ENCODE measurements at regions of chr2 and their contacts with region 1.

Region 1: DNA sequence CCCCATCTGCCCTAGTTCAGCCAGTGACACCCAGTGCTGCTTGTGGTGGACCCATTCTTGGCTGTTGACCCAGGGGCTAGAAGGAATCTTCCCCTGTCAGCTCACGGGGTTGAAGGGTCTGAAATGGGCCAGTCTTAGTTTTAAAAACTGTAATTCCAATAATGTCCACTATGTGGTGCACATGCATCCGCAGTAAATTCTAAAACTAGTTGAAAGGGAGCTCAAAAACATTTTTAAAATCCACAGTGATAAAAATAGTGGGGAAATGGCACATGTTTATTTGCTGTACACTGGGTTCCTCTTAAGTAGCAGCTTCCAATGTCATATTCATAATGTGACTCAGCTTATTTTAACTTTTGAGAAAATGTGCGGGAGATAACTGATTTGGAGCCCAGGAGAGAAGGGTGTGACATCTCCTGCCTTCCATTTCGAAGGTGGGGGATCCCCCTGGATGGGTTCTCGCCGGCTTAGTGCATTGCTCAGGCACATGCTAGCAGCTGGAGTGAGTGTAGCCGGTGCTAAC is 32.8 kb downstream of the GRHL1 start:
- DNase-seq: peak; percentile 52
- H3K4me3 Mint-ChIP-seq: no peak overlapping the region
- H3K27ac Mint-ChIP-seq: peak overlapping the region; percentile 15
- H3K4me1 Mint-ChIP-seq: peaks cover 16% of the 10 kb centered on the region
- H3K27me3 Mint-ChIP-seq: peaks cover 5% of the 10 kb centered on the region

Region 2: DNA sequence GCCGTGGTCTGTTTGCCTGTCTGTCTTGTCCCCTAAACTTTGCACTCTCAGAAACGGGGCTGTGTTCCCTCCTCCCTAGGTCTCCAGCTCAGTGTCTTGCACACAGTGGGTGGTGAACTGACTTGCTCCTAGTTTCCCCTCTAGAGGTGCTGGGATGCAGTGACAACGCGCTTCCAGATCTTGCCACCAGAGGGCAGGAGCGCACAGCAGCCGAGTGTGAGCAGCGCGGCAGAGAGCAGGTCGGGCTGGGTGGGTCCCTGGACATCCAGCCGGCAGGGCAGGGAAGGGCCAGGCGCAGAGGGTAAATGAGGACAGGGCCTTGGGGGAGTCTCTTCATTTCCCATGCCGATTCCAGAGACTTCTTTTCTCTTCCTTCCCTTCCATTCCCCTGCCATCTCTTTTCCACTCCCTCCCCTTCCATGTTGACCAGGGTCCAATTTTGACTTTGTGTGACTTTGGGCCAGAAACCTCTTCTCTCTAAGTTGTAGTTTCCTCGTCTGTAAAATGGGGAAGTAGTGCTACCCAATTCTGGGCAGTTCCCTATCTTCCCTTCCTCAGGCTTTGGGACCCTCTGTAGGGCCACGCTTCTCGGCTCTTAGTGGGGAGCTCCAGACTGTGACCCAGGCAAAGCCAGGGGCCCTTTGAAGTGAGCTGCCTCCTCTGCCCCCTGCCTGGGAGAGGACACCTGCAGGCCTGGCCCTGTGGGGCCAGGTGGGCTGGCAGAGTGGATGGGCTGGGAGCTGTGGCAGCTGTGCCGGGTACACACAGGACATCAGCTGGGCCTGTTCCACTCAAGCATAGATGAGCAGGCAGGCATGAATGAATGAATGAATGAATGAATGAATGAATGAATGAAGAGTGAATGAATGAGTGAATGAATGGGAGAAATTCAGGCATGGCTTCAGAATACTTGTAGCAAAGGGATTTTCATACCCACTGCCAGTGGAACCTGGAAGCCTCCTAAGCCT is 184.3 kb before region 1 on chr2:
- CTCF ChIA-PET with region 1: interaction called, 10 read pairs
- POLR2A ChIA-PET with region 1: no interaction called
- intact Hi-C with region 1: no loop called
- DNase-seq: peak; percentile 94
- H3K4me3 Mint-ChIP-seq: no peak overlapping the region
- H3K27ac Mint-ChIP-seq: peak overlapping the region; percentile 36
- H3K4me1 Mint-ChIP-seq: peaks cover 35% of the 10 kb centered on the region
- H3K27me3 Mint-ChIP-seq: no peaks in the 10 kb centered on the region

Region 3: DNA sequence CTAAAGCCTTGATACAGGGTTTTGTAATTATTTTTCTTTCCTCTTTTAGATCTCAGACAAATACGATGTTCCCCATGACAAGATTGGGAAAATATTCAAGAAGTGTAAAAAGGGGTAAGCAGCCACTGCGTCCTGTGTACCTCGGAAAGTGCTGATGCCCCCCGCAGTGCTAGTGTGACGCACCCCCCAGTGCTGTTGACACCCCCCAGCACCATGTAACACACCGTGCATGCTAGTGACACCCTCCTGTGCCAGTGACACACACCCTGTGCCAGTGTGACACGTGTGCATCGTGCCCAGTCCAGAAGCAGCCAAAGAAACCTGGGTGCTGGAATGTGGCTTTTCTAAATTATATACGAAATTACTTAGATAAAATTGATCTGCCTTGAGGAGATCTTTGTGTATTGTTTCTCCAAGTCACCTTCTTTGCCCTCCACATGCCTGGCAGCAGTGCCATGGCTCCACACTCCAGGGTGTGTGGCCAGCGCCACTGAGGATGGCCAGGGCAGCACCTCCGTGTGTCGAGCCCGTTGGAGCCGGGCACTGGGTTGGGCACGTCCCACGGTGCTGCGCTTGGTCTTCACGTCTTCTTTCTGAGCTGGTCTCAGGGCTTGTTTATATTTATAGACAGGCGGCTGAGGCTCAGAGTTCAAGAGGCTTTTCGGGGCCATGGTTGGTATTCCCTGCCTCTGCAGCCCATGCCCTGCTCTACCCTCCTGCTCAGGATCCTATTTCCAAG is 14.8 kb after region 1 on chr2:
- CTCF ChIA-PET with region 1: interaction called, 44 read pairs
- POLR2A ChIA-PET with region 1: no interaction called
- intact Hi-C with region 1: no loop called
- DNase-seq: no peak
- H3K4me3 Mint-ChIP-seq: no peak overlapping the region
- H3K27ac Mint-ChIP-seq: no peak overlapping the region
- H3K4me1 Mint-ChIP-seq: peaks cover 3% of the 10 kb centered on the region
- H3K27me3 Mint-ChIP-seq: no peaks in the 10 kb centered on the region

Region 4: GRCh38 chr2:10036095-10036884 is 52.0 kb after region 1 on chr2:
- CTCF ChIA-PET with region 1: interaction called, 44 read pairs
- POLR2A ChIA-PET with region 1: no interaction called
- intact Hi-C with region 1: no loop called
- DNase-seq: peak; percentile 77
- H3K4me3 Mint-ChIP-seq: no peak overlapping the region
- H3K27ac Mint-ChIP-seq: peak overlapping the region; percentile 50
- H3K4me1 Mint-ChIP-seq: peaks cover 19% of the 10 kb centered on the region
- H3K27me3 Mint-ChIP-seq: no peaks in the 10 kb centered on the region

Region 5: GRCh38 chr2:10072656-10073480 is 88.6 kb after region 1 on chr2:
- CTCF ChIA-PET with region 1: interaction called, 18 read pairs
- POLR2A ChIA-PET with region 1: no interaction called
- intact Hi-C with region 1: no loop called
- DNase-seq: peak; percentile 86
- H3K4me3 Mint-ChIP-seq: no peak overlapping the region
- H3K27ac Mint-ChIP-seq: no peak overlapping the region
- H3K4me1 Mint-ChIP-seq: peaks cover 4% of the 10 kb centered on the region
- H3K27me3 Mint-ChIP-seq: peaks cover 37% of the 10 kb centered on the region